Activated CD4-positive, alpha-beta T cell treated with anti-CD3 and anti-CD28 coated beads for 36 hours (primary cell): ENCODE measurements at regions of chr12 and their contacts with region 1.

Region 1: DNA sequence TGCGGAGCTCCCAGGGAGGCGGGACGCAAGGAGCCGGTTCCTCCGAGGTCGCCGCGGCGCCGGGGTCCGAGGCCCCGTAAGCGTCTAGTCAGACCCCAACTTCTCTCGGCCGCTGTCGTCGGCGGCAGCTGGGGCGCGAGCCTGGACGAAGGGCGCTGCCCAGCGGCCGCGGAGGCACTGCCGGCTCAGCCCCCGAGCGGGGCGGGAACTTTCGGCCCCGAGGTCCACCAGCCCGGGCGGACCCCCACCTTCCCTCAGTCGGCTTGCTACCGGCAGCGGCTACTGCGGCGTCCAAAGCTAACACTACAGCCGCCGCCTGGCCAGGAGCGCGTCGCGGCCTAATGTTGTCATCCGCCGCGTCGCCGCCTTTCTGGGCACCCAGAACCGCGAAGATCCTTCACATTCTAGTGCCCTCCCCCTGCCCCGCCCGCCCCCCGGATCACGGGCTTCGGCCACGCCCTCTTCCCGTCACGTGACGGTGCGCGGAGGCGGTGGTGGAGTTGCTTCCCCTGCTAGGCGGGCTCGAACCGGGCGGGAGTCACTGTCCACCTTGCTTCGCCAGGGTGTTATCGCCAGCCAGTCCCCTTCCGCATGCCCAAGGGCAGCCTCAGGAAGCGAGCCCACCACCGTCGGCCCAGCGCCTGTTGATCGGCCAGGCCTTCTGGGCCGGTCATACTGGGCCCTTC is at the start of gene OSBPL8:
- DNase-seq: peak; percentile 98
- ATAC-seq: peak; percentile 70
- H3K4me3 Mint-ChIP-seq: peak within 1 kb of the TSS; percentile 86
- H3K27ac Mint-ChIP-seq: peak within 1 kb of the TSS; percentile 98
- H3K4me1 Mint-ChIP-seq: peaks cover 24% of the 10 kb centered on the region
- H3K27me3 Mint-ChIP-seq: no peaks in the 10 kb centered on the region
- total RNA-seq, gene OSBPL8: 70.2 to 78.5 TPM

Region 2: DNA sequence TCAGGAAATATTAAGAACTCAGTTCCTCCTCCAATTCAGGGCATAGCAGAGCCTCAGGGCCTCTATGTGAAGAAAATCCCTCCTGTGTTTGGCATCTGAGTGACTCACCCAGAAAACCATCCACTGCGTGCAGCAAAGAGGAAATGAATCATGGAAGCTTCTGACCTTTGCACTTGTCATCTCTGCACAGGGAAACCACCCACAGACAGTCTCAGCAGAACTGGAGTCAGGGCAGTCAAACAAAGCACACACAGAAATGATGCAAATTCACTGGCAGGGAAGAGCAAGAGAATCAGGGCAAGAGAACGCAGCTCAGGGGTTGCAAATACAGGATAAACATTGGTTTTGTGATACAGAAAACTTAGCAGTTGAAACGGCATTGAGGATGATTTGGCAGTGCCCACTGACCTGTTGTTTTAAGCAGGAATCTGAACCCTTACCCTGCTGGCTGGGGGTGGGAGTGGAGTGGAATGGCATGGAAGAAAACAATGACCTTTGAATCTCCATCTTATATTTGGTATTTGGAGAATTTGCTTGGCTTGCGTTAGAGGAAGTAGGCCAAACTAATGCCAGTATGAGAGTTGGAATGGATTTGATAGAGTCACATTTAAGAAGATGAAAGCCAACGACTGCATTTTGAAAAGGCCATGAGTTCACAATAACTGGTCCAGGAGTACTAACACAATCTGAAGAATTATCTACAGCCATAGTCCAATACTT is 581.4 kb before region 1 on chr12:
- CTCF ChIA-PET with region 1: no interaction called
- POLR2A ChIA-PET with region 1: no interaction called
- intact Hi-C with region 1: loop called in 1 of 2 experiments (anchors 2 kb)
- DNase-seq: peak; percentile 85
- ATAC-seq: peak; percentile 80
- H3K4me3 Mint-ChIP-seq: peak overlapping the region; percentile 59
- H3K27ac Mint-ChIP-seq: peak overlapping the region; percentile 100
- H3K4me1 Mint-ChIP-seq: peaks cover 69% of the 10 kb centered on the region
- H3K27me3 Mint-ChIP-seq: no peaks in the 10 kb centered on the region

Region 3: GRCh38 chr12:76455582-76456345 is 103.8 kb before region 1 on chr12:
- CTCF ChIA-PET with region 1: no interaction called
- POLR2A ChIA-PET with region 1: no interaction called
- intact Hi-C with region 1: loop called in 1 of 2 experiments (anchors 5 kb)
- DNase-seq: peak; percentile 31
- ATAC-seq: peak; percentile 99
- H3K4me3 Mint-ChIP-seq: no peak overlapping the region
- H3K27ac Mint-ChIP-seq: no peak overlapping the region
- H3K4me1 Mint-ChIP-seq: peaks cover 33% of the 10 kb centered on the region
- H3K27me3 Mint-ChIP-seq: no peaks in the 10 kb centered on the region

Region 4: DNA sequence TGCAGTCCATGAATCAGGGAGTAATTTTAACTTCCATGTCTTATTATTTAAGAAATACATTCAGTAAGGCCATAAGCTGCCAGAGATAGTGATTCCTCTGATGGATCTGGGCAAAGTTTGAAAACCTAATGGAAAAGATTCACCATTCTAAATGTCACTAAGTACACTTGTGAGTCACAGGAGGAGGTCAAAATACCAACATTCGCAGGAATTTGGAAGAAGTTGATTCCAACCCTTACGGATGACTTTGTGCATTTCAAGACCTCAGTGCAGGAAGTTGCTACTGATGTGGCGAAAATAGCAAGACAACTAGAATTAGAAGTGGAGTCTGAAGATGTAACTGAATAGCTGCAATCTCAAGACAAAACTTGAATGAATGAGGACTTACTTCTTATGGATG is 69.8 kb before region 1 on chr12:
- CTCF ChIA-PET with region 1: no interaction called
- POLR2A ChIA-PET with region 1: no interaction called
- intact Hi-C with region 1: no loop called
- DNase-seq: no peak
- ATAC-seq: no peak
- H3K4me3 Mint-ChIP-seq: no peak overlapping the region
- H3K27ac Mint-ChIP-seq: no peak overlapping the region
- H3K4me1 Mint-ChIP-seq: peaks cover 28% of the 10 kb centered on the region
- H3K27me3 Mint-ChIP-seq: no peaks in the 10 kb centered on the region

Region 5: DNA sequence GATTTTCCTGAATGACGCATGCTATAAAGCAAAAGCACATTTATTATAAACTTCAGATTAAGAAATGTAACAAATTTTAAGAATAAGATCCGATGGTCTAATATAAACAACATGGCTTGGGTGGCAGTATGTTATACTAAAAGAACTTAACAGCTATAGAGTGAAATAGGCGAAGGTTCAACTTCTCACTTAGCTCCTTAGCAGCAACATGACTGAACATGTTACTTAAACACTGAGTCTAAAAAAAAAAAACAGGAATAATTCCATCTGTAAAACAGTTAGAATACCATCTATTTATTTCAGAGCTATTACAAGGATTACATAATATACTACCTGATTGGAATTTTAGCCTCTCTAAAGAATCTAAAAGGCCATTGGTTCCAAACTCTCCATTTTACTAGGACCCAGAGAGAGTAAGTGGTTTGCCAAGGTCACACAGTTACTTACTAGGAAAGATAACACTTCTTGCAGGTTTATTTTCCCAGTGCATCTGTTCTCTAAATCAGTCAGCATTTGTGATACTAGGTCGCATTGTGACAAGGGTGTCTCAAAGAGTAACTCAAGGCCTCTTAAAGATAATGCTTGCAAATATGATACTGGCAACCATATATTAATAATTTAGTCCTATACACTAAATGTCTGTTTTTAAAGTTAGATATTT is 14.8 kb before region 1 on chr12:
- CTCF ChIA-PET with region 1: interaction called, 5 read pairs
- POLR2A ChIA-PET with region 1: interaction called, 4 read pairs
- intact Hi-C with region 1: loop called in 1 of 2 experiments (anchors 2 kb)
- DNase-seq: no peak
- ATAC-seq: peak; percentile 72
- H3K4me3 Mint-ChIP-seq: no peak overlapping the region
- H3K27ac Mint-ChIP-seq: no peak overlapping the region
- H3K4me1 Mint-ChIP-seq: peaks cover 74% of the 10 kb centered on the region
- H3K27me3 Mint-ChIP-seq: no peaks in the 10 kb centered on the region

Region 6: DNA sequence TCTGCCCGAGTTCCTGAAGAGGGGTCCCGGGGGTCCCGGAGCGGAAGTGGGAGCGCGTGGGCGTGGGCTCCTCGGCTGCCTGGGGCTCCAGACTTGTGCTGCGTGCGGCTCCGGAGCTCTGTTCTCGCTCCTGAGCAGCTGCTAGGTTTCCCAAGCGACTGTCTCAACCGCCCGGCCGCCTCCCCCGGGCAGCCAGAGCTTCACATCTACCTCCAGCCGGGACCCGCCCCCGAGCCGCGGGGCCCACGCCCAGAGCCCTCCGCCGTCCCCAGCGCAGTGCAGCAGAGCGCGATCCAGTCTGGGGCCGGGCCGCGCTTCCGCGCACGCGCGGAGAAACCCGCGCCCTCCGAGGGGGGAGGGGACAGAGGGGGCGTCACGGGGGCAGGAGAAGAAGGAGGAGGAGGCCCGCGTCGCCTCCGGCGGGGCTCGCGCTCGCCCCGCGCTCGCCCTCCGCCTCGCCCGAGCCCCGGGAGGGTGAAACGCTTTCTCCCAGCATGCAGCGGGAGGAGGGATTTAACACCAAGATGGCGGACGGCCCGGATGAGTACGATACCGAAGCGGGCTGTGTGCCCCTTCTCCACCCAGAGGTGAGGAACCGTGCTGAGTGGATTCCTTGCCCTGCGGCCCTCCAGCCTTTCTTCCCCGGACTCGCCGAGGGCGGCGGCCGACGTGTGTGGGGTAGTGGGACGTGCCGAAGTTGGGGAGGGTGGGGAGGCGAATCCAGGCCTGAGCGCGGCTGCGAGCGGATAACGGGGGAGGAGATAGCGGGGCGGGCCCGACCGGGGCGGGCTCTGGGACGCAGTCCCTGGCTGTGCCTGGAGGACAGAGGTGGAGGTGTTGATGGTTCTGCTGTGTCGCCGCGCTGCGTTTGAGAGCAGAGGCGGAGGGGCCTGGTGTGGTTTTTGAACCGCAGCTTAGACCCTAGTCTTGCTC is 204.5 kb after region 1 on chr12 and contains the start of gene ZDHHC17:
- CTCF ChIA-PET with region 1: no interaction called
- POLR2A ChIA-PET with region 1: interaction called, 3 read pairs
- intact Hi-C with region 1: loop called (anchors 1 kb)
- DNase-seq: peak; percentile 93
- ATAC-seq: peak; percentile 89
- H3K4me3 Mint-ChIP-seq: peak within 1 kb of the TSS; percentile 96
- H3K27ac Mint-ChIP-seq: peak within 1 kb of the TSS; percentile 97
- H3K4me1 Mint-ChIP-seq: peaks cover 41% of the 10 kb centered on the region
- H3K27me3 Mint-ChIP-seq: no peaks in the 10 kb centered on the region
- total RNA-seq, gene ZDHHC17: 17.6 to 22.7 TPM